ENCODE measurements at regions of chr14 and their contacts with region 1.

Region 1: DNA sequence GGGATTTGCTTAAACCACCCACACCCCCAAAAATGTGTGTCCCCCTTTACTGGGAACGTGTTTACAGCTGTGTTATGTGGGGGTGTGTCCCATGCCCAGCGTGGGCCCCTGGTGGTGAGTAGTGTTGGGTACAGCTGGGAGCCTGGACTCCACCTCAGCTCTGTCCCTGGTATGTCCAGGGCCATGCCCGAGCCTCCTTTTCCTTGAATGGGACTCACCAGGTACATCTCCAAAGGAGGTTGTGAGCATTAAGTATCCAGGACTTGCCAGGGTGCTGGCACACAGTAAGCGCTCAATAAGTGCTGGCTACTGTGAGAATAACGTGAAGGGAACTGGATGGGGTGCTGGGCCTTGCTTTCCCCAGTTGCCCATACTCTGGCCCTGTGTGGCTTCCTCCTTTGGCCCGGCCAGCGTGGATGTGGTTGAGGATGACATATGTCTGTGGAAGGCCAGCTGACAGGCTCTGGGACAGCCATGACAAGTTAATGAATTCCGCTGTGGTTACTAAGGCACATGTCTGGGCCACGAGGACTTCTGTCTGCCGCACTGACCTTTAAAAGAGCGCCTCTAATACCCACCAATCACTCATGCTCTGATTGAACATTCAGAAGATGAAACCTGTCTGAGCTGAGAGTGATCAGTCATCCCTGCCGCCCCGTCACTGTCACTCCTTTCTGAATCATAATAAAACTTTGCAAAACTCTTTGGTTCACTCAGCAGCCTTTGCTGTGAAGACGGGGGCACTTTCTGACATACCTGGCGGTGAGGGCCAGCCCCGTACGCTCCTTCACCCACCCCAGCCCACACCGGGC is 74.7 kb downstream of the DIO3 start:
- DNase-seq: peak; percentile 85
- H3K4me3 Mint-ChIP-seq: no peak overlapping the region
- H3K27ac Mint-ChIP-seq: peak overlapping the region; percentile 14
- H3K4me1 Mint-ChIP-seq: peaks cover 19% of the 10 kb centered on the region
- H3K27me3 Mint-ChIP-seq: peaks cover 34% of the 10 kb centered on the region

Region 2: GRCh38 chr14:101444116-101444515 is 191.8 kb before region 1 on chr14:
- CTCF ChIA-PET with region 1: no interaction called
- POLR2A ChIA-PET with region 1: no interaction called
- intact Hi-C with region 1: loop called (anchors 10 kb)
- DNase-seq: no peak
- H3K4me3 Mint-ChIP-seq: no peak overlapping the region
- H3K27ac Mint-ChIP-seq: no peak overlapping the region
- H3K4me1 Mint-ChIP-seq: peaks cover 32% of the 10 kb centered on the region
- H3K27me3 Mint-ChIP-seq: peaks cover 69% of the 10 kb centered on the region

Region 3: GRCh38 chr14:101654051-101654450 is 18.1 kb after region 1 on chr14:
- CTCF ChIA-PET with region 1: no interaction called
- POLR2A ChIA-PET with region 1: no interaction called
- intact Hi-C with region 1: loop called (anchors 2 kb)
- DNase-seq: no peak
- H3K4me3 Mint-ChIP-seq: no peak overlapping the region
- H3K27ac Mint-ChIP-seq: no peak overlapping the region
- H3K4me1 Mint-ChIP-seq: no peaks in the 10 kb centered on the region
- H3K27me3 Mint-ChIP-seq: peaks cover 7% of the 10 kb centered on the region